Activated B cell treated with CpG ODN at 0.5 μM for 24 hours (primary cell): ENCODE measurements at regions of chr3 and their contacts with region 1.

Region 1: DNA sequence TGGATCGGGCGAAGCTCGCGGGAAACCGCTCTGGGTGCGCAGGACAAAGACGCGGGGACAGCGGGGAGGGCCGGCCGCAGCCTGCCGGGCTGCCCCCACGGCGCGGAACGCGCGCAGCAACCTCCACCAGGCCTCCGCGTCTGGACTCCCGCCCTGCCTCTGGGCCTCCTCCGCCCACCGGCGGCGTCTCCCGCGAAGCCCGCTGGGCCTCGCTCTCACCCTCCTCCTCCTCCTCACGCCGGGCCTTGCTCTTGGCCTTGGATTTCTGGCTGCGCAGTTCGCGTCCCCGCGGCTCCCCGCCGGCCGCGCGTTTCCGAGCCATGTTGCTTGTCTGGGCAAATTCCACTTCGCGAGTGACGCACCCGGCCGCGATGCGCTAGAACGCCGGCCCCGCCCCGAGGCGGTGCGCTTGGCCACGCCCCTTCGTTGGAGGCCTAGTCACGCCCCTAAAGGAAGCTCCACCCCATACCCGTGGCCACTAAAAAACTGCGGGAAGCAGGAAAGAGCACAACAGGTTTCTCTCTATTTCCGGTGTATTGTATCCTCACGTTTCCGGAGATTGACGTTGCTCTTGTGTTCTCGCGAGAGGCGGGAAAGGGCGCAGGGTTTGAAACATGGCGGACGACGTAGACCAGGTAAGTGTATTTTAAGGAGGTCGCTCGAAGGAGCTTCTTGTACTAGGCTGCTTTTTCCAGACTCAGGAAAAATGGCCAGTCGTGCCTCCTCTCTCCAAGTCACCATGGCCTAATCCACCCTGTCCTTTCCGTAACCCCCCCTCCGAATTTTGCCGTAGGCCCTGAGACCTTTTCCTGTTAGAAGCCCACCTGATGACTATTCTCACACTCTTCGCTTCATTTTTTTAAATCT is at the starts of genes LSM3 and XPC:
- DNase-seq: peak; percentile 98
- ATAC-seq: peak; percentile 96
- H3K4me3 Mint-ChIP-seq: peak within 1 kb of the TSS; percentile 97
- H3K27ac Mint-ChIP-seq: peak within 1 kb of the TSS; percentile 98
- H3K4me1 Mint-ChIP-seq: peaks cover 63% of the 10 kb centered on the region
- H3K27me3 Mint-ChIP-seq: no peaks in the 10 kb centered on the region
- CTCF ChIP-seq: no peak
- total RNA-seq, gene LSM3: 12.9 and 14.2 TPM in 2 replicates
- total RNA-seq, gene XPC: 35.4 and 35.6 TPM in 2 replicates

Region 2: GRCh38 chr3:12556671-12557472 is 1621.6 kb before region 1 on chr3 and contains the start of gene MKRN2:
- CTCF ChIA-PET with region 1: no interaction called
- POLR2A ChIA-PET with region 1: no interaction called
- intact Hi-C with region 1: loop called (anchors 2 kb)
- DNase-seq: peak; percentile 85
- ATAC-seq: peak; percentile 96
- H3K4me3 Mint-ChIP-seq: peak within 1 kb of the TSS; percentile 89
- H3K27ac Mint-ChIP-seq: peak within 1 kb of the TSS; percentile 62
- H3K4me1 Mint-ChIP-seq: peaks cover 62% of the 10 kb centered on the region
- H3K27me3 Mint-ChIP-seq: peaks cover 9% of the 10 kb centered on the region
- CTCF ChIP-seq: no peak
- total RNA-seq, gene MKRN2: 22.2 and 22.3 TPM in 2 replicates

Region 3: GRCh38 chr3:13839726-13840320 is 338.7 kb before region 1 on chr3:
- CTCF ChIA-PET with region 1: no interaction called
- POLR2A ChIA-PET with region 1: no interaction called
- intact Hi-C with region 1: no loop called
- DNase-seq: no peak
- ATAC-seq: no peak
- H3K4me3 Mint-ChIP-seq: no peak overlapping the region
- H3K27ac Mint-ChIP-seq: no peak overlapping the region
- H3K4me1 Mint-ChIP-seq: no peaks in the 10 kb centered on the region
- H3K27me3 Mint-ChIP-seq: peaks cover 8% of the 10 kb centered on the region
- CTCF ChIP-seq: no peak

Region 4: GRCh38 chr3:13895155-13896105 is 283.1 kb before region 1 on chr3:
- CTCF ChIA-PET with region 1: interaction called, 3 read pairs
- POLR2A ChIA-PET with region 1: interaction called, 5 read pairs
- intact Hi-C with region 1: loop called (anchors 1 kb)
- DNase-seq: peak; percentile 86
- ATAC-seq: peak; percentile 99
- H3K4me3 Mint-ChIP-seq: peak overlapping the region; percentile 89
- H3K27ac Mint-ChIP-seq: peak overlapping the region; percentile 78
- H3K4me1 Mint-ChIP-seq: peaks cover 41% of the 10 kb centered on the region
- H3K27me3 Mint-ChIP-seq: peaks cover 5% of the 10 kb centered on the region
- CTCF ChIP-seq: no peak

Region 5: GRCh38 chr3:14144423-14145075 is 33.9 kb before region 1 on chr3:
- CTCF ChIA-PET with region 1: interaction called, 4 read pairs
- POLR2A ChIA-PET with region 1: interaction called, 8 read pairs
- intact Hi-C with region 1: loop called (anchors 1 kb)
- DNase-seq: peak; percentile 33
- ATAC-seq: peak; percentile 89
- H3K4me3 Mint-ChIP-seq: peak overlapping the region; percentile 57
- H3K27ac Mint-ChIP-seq: peak overlapping the region; percentile 96
- H3K4me1 Mint-ChIP-seq: peaks cover 20% of the 10 kb centered on the region
- H3K27me3 Mint-ChIP-seq: no peaks in the 10 kb centered on the region
- CTCF ChIP-seq: no peak

Region 6: DNA sequence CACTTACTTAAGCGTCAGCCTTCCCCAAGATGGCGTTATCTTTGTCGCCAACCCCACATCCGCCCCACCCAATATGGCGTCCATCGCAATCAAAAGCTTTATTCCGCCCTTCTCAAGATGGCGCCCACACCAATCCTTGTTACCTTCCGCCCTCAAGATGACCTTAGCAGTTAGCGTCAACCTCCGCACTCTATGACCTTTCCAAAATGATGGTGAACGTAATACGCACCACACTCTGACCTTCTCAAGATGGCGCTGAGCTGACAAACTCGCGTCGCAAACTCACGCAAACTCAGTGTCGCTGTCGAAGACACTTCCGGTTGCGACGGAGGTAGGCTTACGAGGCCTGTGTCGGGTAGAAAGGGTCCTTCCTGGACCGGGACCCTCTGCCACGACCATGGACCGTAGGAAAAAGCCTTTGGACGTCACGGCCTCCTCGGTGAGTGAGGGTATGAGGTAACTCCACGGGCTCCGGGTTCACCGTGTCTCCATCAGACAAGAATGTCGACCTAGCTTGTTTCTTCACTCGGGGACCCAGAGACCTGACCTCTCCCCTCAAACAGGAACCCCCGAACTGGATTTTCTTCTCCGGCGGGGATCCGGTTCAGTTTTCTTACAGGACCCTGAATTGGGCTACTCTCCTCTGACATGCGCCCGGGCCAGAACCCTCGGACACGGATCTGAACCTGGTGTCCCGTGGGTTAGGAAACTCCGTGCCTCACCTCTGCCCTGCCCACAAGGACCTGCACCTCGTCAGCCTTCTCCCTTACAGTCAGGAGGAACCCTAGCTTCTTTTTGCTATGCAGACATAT is 473.2 kb after region 1 on chr3 and contains the start of gene CCDC174:
- CTCF ChIA-PET with region 1: no interaction called
- POLR2A ChIA-PET with region 1: interaction called, 28 read pairs
- intact Hi-C with region 1: loop called (anchors 1 kb)
- DNase-seq: peak; percentile 86
- ATAC-seq: peak; percentile 97
- H3K4me3 Mint-ChIP-seq: peak within 1 kb of the TSS; percentile 95
- H3K27ac Mint-ChIP-seq: peak within 1 kb of the TSS; percentile 93
- H3K4me1 Mint-ChIP-seq: peaks cover 34% of the 10 kb centered on the region
- H3K27me3 Mint-ChIP-seq: no peaks in the 10 kb centered on the region
- CTCF ChIP-seq: no peak
- total RNA-seq, gene CCDC174: 30.2 and 32.4 TPM in 2 replicates